ENCODE measurements at regions of chr3 and their contacts with region 1.

Region 1: DNA sequence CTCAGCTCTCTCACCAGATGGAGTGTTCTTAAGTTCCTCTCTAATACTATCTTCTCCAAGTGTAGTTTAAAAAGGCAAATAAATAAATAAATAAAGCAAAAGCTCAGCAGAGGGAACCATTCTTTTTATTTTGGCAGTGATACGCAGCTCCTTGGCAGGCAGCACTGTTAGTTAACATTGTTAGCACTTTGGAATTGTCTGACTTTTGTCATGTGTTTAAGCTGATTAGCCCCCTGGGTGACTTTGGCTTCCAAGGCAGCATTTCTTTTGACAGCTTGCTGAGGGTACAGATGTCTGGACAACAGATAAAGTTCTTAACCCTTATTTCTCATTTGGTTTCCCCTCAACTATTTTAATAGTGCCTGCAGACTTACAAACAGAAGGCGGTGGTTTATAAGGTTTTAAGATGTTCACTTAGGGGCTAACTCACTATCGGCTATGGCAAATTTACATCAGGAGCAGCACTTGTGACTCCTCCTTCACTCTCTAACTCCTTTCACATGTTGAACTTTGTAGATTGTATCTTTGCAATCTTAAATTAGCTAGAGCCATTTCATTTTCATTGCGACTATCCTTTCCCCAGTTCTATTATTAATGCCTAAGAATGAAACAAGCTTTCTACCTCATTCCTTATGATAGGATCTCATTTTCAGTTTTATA is 213.4 kb downstream of the ZBBX start:
- DNase-seq: peak in 4 of 5 donors; percentile 28 to 75 (median 70)
- ATAC-seq: peak; percentile 85 to 95 (median 89)
- H3K4me3 ChIP-seq: peak overlapping the region in 3 of 12 donors; percentile 0 to 17 (median 1)
- H3K27ac ChIP-seq: peak overlapping the region; percentile 6 to 82 (median 52)
- H3K4me1 ChIP-seq: peaks cover 0 to 19% (median 12%) of the 10 kb centered on the region in 12 donors
- H3K27me3 ChIP-seq: no peaks in the 10 kb centered on the region
- CTCF ChIP-seq: no peak
- POLR2A ChIP-seq: no peak

Region 2: GRCh38 chr3:167209021-167209420 is 42.3 kb after region 1 on chr3:
- intact Hi-C with region 1: no loop called
- DNase-seq: no peak
- ATAC-seq: no peak
- H3K4me3 ChIP-seq: no peak overlapping the region
- H3K27ac ChIP-seq: no peak overlapping the region
- H3K4me1 ChIP-seq: no peaks in the 10 kb centered on the region
- H3K27me3 ChIP-seq: no peaks in the 10 kb centered on the region
- CTCF ChIP-seq: no peak
- POLR2A ChIP-seq: no peak

Region 3: DNA sequence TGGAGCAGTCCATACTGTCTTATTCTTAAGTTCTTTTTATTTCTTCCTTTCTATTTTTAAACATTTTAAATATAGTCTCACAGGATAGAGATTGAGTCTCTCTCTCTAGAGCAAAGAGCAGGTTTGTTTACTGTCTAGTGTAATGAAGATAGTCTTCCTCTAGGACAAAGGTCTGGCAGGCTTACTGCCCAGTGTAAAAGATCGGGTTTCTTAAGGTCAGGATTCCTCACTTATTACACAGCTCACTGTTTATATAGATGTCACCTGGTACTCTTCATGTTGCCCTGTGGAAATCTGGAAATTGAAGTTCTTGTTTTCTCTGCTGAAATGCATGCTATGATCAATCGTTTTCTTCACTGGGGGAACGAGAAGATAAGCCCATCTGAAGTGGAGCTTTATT is 137.4 kb after region 1 on chr3:
- intact Hi-C with region 1: loop called in 4 of 10 experiments (anchors 2 to 10 kb)
- DNase-seq: peak in 4 of 5 donors; percentile 28 to 41 (median 35)
- ATAC-seq: peak; percentile 100
- H3K4me3 ChIP-seq: no peak overlapping the region
- H3K27ac ChIP-seq: peak overlapping the region in 9 of 12 donors; percentile 2 to 73 (median 32)
- H3K4me1 ChIP-seq: peaks cover 0 to 12% (median 2%) of the 10 kb centered on the region in 12 donors
- H3K27me3 ChIP-seq: no peaks in the 10 kb centered on the region
- CTCF ChIP-seq: no peak
- POLR2A ChIP-seq: no peak

Region 4: DNA sequence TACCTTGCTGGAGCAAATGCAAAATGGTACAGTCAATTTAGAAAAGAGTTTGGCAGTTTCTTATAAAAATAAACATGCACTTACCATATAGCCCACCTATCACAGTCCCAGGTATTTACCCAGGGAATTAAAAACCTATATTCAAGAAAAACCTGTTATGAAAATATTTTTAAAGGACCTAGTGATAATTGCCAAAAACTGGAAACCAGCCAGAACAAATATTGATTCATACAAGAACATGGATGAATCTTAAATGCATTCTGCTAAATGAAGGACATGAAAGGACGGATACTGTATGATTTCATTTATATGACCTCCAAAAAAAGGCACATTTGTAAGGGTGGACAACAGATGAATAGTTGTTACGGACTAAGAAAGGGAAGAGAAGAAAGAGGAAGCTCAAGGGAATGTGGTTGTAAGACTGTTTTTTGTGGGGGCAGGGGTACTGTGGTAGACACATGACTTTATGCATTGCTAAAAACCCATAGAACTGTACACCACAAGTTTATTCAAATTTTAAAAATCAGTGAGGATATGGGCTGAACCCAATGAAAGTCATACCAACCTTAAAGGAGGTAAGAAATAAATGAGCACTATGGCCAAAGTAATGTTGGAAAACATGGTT is 152.4 kb after region 1 on chr3:
- intact Hi-C with region 1: loop called in 1 of 10 experiments (anchors 10 kb)
- DNase-seq: no peak
- ATAC-seq: no peak
- H3K4me3 ChIP-seq: no peak overlapping the region
- H3K27ac ChIP-seq: no peak overlapping the region
- H3K4me1 ChIP-seq: no peaks in the 10 kb centered on the region
- H3K27me3 ChIP-seq: no peaks in the 10 kb centered on the region
- CTCF ChIP-seq: no peak
- POLR2A ChIP-seq: no peak

Region 5: DNA sequence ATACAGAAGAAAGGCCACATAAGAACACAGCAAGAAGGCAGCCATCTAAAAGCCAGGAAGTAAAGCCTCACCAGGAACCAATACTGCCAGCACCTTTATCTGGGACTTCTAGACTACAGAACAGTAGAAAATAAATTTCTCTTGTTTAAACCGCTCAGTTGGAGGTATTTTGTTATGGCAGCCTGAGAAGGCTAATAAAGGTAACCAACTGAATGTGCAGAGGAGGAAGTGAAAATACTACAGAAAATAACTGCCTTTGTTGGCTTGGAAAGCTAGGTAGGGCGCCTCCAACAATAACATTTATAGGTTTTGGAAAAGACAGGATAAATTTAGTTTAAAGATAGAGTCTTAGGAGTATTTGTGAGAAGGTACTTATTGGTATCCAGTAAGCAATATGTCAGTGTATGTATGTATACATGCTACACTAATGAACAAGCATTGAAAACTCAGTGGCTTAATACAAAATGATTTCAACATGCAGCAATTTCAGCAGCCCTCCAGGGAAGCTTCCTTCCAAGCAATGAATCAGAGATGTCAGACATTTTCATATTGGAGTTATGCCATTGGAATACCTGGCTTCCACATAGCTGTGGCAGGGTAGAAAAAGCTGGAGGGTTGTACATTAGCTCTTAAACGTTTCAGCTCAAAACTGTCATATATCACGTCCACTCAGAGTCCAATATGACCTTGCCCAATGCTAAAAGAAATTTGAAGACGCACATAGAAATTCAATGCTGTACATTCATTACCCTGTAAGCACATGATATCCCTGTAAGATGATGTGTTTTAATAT is 164.5 kb after region 1 on chr3:
- intact Hi-C with region 1: no loop called
- DNase-seq: no peak
- ATAC-seq: no peak
- H3K4me3 ChIP-seq: no peak overlapping the region
- H3K27ac ChIP-seq: no peak overlapping the region
- H3K4me1 ChIP-seq: no peaks in the 10 kb centered on the region
- H3K27me3 ChIP-seq: no peaks in the 10 kb centered on the region
- CTCF ChIP-seq: no peak
- POLR2A ChIP-seq: no peak

Measured in heart left ventricle (tissue), 16 donors.